Activated B cell treated with CpG ODN at 0.5 μM for 24 hours (primary cell): ENCODE measurements at regions of chr17 and their contacts with region 1.

Region 1: GRCh38 chr17:58329035-58329809 is 627 bp upstream of the TSPOAP1 start:
- DNase-seq: peak; percentile 75
- ATAC-seq: peak; percentile 36
- H3K4me3 Mint-ChIP-seq: peak overlapping the region; percentile 100
- H3K27ac Mint-ChIP-seq: peak overlapping the region; percentile 93
- H3K4me1 Mint-ChIP-seq: peaks cover 65% of the 10 kb centered on the region
- H3K27me3 Mint-ChIP-seq: peaks cover 2% of the 10 kb centered on the region
- CTCF ChIP-seq: no peak

Region 2: GRCh38 chr17:58344047-58344790 is 15.0 kb after region 1 on chr17:
- CTCF ChIA-PET with region 1: interaction called, 89 read pairs
- POLR2A ChIA-PET with region 1: interaction called, 3,007 read pairs
- intact Hi-C with region 1: loop called (anchors 1 kb)
- DNase-seq: peak; percentile 71
- ATAC-seq: peak; percentile 83
- H3K4me3 Mint-ChIP-seq: peak overlapping the region; percentile 83
- H3K27ac Mint-ChIP-seq: peak overlapping the region; percentile 99
- H3K4me1 Mint-ChIP-seq: peaks cover 91% of the 10 kb centered on the region
- H3K27me3 Mint-ChIP-seq: no peaks in the 10 kb centered on the region
- CTCF ChIP-seq: no peak

Region 3: DNA sequence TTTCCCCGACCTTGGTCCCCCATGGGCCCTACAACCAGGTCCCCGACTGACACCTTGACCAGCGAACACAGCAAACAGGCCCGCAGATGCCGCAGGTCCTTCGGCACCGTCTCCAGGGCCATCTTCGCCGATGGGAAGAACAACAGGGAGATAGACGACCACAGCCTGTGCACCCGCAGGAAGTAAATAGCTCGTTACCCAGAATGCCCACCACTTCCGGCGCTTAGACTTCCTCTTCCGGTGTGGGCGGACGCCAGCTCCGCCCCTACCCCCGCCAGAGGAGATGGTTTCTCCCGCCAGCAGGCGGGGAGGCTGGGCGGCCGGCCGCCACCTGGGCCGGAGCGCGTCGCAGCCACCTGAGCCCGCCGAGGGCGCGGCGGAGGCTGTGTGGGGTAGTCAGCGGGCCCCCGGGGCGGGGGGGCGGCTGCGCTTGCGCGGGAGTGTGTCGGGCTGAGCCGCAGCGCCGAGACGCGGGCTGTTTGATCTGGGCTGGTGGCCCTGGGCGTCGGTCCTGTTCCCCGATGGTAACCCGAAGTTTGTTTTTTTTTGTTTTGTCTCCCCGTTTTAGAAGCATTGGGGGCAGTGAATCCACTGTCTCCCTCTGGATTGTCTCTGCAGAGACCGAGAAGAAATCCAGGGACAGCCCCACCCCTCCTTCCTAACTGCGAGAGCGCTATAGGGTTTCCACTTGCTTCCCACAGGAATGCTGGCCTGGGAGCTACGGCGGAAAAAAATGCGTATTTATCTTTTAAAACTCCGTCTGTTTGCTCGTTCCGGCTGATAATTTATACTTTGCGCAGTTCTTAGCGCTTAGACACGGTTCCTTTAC is 23.0 kb after region 1 on chr17 and contains the start of gene SUPT4H1:
- CTCF ChIA-PET with region 1: interaction called, 7 read pairs
- POLR2A ChIA-PET with region 1: interaction called, 3,007 read pairs
- intact Hi-C with region 1: loop called (anchors 1 kb)
- DNase-seq: peak; percentile 91
- ATAC-seq: peak; percentile 92
- H3K4me3 Mint-ChIP-seq: peak within 1 kb of the TSS; percentile 100
- H3K27ac Mint-ChIP-seq: peak within 1 kb of the TSS; percentile 97
- H3K4me1 Mint-ChIP-seq: peaks cover 49% of the 10 kb centered on the region
- H3K27me3 Mint-ChIP-seq: no peaks in the 10 kb centered on the region
- CTCF ChIP-seq: no peak
- total RNA-seq, gene SUPT4H1: 90.2 and 100 TPM in 2 replicates

Region 4: GRCh38 chr17:58369214-58370031 is 40.2 kb after region 1 on chr17:
- CTCF ChIA-PET with region 1: no interaction called
- POLR2A ChIA-PET with region 1: interaction called, 126 read pairs
- intact Hi-C with region 1: no loop called
- DNase-seq: no peak
- ATAC-seq: peak; percentile 66
- H3K4me3 Mint-ChIP-seq: no peak overlapping the region
- H3K27ac Mint-ChIP-seq: peak overlapping the region; percentile 51
- H3K4me1 Mint-ChIP-seq: peaks cover 42% of the 10 kb centered on the region
- H3K27me3 Mint-ChIP-seq: no peaks in the 10 kb centered on the region
- CTCF ChIP-seq: no peak

Region 5: GRCh38 chr17:58447039-58447975 is 118.1 kb after region 1 on chr17:
- CTCF ChIA-PET with region 1: no interaction called
- POLR2A ChIA-PET with region 1: interaction called, 13 read pairs
- intact Hi-C with region 1: no loop called
- DNase-seq: peak; percentile 43
- ATAC-seq: peak; percentile 93
- H3K4me3 Mint-ChIP-seq: no peak overlapping the region
- H3K27ac Mint-ChIP-seq: no peak overlapping the region
- H3K4me1 Mint-ChIP-seq: peaks cover 11% of the 10 kb centered on the region
- H3K27me3 Mint-ChIP-seq: no peaks in the 10 kb centered on the region
- CTCF ChIP-seq: no peak

Region 6: DNA sequence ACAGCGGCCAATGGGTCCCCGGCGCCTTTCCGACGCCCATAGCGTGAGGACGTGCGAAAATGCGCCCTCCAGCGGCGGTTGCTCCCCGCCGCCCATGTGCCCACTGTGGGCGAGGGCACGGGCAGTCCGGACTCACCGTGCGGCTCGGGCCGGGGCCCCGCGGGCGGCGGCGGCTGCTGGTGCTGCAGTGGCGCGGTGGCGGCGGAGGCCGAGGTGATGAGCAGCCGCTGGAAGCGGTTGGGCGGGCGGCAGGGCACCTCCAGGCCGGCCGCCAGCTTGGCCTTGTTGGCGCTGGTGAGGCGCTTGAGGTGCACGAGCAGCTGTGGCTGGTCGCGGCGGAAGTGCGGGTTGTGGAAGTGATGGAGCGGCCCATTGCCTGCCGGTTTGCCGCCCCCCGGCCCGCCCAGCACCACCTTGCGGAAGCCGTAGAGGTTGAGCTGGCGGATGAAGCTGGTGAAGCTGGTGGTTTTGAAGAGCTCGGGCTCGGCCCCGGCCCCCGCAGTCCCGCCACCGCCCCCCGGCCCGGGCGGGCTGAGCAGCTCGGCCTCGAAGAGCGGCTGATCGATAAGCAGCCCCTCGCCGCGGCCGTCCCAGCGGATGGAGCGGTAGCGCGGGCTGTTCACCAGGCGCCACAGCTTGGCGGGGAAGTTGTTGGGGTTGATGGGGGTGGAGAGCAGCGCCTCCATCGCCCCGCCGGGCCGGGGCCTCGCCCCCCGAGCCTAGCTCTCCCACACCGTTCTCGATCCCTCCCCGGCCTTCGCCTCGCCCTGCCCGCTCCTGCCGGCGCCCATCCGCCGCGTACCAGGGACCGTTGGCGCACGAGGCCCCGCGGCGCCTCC is 158.6 kb after region 1 on chr17 and contains the start of gene HSF5:
- CTCF ChIA-PET with region 1: no interaction called
- POLR2A ChIA-PET with region 1: interaction called, 18 read pairs
- intact Hi-C with region 1: no loop called
- DNase-seq: peak; percentile 79
- ATAC-seq: peak; percentile 96
- H3K4me3 Mint-ChIP-seq: peak within 1 kb of the TSS; percentile 69
- H3K27ac Mint-ChIP-seq: peak within 1 kb of the TSS; percentile 66
- H3K4me1 Mint-ChIP-seq: peaks cover 19% of the 10 kb centered on the region
- H3K27me3 Mint-ChIP-seq: no peaks in the 10 kb centered on the region
- CTCF ChIP-seq: no peak
- total RNA-seq, gene HSF5: 4.5 and 5.5 TPM in 2 replicates

Region 7: GRCh38 chr17:58504826-58505521 is 175.8 kb after region 1 on chr17:
- CTCF ChIA-PET with region 1: no interaction called
- POLR2A ChIA-PET with region 1: interaction called, 10 read pairs
- intact Hi-C with region 1: no loop called
- DNase-seq: peak; percentile 44
- ATAC-seq: peak; percentile 94
- H3K4me3 Mint-ChIP-seq: peak overlapping the region; percentile 64
- H3K27ac Mint-ChIP-seq: peak overlapping the region; percentile 97
- H3K4me1 Mint-ChIP-seq: peaks cover 28% of the 10 kb centered on the region
- H3K27me3 Mint-ChIP-seq: no peaks in the 10 kb centered on the region
- CTCF ChIP-seq: no peak